Lower leg skin (tissue), 4 donors: ENCODE measurements at regions of chr17 and their contacts with region 1.

Region 1: DNA sequence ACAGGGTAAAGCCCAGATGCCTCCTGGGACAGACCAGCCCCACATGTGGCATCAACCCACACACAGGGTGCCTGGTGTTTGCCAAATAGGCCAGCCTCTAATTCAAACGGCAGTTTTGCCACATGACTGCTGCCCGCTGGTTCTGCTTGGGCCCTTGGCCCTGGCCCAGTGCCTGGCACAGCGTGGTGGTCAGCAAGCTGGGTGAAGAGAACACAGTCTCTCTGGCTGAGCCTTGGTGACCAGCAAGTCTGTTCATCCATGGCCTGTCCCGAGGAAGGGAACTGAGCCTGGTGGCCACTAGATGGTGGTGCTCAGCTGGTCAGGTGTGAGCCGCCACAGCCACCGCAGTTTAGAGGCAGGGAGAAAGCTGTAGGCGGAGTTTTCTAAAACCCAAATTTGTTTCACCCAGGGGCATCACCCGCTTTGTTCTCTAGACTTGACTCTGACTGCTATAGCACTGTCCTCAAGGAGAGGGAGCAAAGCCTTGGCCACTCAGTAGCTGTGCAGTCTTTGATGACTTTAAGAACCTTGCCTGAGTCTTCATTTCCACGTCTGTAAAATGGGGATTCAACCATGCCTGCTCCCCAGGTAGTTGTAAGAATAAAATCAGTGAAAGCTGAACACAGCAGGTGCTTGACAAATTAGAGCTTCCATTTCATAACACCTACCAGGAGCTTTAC is 4.7 kb upstream of the GFAP start:
- DNase-seq: peak; percentile 64 to 92
- H3K4me3 ChIP-seq: no peak overlapping the region
- CTCF ChIP-seq: peak in 1 of 3 donors; percentile 70
- POLR2A ChIP-seq: no peak

Region 2: DNA sequence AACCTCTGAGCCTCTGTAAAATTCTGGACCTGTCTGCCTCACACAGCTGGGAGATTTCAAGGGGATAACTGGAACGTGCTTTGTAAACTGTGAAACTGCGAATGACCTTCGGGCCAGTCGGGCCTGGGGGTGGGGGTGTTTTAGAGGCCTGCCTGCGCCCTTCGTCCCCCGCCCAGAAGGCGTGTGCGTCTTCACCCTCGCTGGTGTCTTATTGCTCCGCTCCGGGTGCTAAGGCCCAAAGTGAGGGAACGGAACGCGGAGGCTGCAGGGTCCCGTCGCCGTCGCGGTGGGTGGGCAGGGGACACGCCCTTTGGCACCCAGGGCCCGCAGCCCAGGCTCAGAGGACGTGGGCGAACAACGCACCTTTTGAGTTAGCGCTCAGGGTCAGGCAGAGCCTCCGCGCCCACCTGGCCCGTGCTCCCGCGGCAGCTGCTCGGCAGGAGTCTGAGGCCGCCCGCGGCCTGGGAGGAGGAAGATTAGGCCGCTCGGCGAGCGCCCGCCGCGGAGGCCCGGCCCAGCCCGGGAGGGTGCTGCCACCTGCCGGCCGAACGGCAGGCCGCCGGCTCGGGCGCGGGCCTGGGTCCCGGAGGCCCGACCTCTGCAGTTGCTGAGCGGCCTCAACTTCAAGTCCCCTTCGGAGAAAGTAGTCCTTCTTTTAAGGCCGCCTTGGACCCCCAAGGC is 101.7 kb after region 1 on chr17:
- intact Hi-C with region 1: loop called (anchors 5 kb)
- DNase-seq: peak in 1 of 2 donors; percentile 91
- H3K4me3 ChIP-seq: no peak overlapping the region
- CTCF ChIP-seq: no peak
- POLR2A ChIP-seq: no peak

Region 3: GRCh38 chr17:45108595-45109521 is 188.8 kb after region 1 on chr17:
- intact Hi-C with region 1: loop called (anchors 10 kb)
- DNase-seq: no peak
- H3K4me3 ChIP-seq: no peak overlapping the region
- CTCF ChIP-seq: no peak
- POLR2A ChIP-seq: no peak